Heart right ventricle (tissue), 16 donors: ENCODE measurements at regions of chrX and their contacts with region 1.

Region 1: DNA sequence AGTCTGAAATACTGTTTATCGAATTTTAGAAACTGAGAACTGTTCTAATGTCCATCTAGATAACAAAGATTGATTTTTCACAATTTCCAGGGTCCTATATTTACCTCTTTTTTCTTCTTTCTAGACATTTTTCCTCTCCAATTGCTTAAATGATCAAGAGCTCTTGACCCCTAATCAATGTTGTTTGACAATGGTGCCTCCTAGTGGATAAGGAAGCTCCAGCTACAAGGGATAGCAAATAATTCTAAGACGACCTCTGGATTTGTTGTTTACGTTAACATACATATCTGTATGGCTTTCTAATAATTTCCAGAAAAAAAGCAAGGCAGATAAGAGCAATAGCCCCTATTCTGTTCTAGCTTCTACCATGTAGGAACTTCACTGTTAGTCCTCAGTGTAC is 35.8 kb downstream of the GPR82 start:
- DNase-seq: no peak
- ATAC-seq: no peak
- H3K4me3 ChIP-seq: no peak overlapping the region
- H3K27ac ChIP-seq: no peak overlapping the region
- H3K4me1 ChIP-seq: no peaks in the 10 kb centered on the region
- H3K27me3 ChIP-seq: peaks cover 0 to 20% (median 0%) of the 10 kb centered on the region in 7 donors
- CTCF ChIP-seq: peak in 7 of 9 donors; percentile 43 to 61 (median 56)

Region 2: DNA sequence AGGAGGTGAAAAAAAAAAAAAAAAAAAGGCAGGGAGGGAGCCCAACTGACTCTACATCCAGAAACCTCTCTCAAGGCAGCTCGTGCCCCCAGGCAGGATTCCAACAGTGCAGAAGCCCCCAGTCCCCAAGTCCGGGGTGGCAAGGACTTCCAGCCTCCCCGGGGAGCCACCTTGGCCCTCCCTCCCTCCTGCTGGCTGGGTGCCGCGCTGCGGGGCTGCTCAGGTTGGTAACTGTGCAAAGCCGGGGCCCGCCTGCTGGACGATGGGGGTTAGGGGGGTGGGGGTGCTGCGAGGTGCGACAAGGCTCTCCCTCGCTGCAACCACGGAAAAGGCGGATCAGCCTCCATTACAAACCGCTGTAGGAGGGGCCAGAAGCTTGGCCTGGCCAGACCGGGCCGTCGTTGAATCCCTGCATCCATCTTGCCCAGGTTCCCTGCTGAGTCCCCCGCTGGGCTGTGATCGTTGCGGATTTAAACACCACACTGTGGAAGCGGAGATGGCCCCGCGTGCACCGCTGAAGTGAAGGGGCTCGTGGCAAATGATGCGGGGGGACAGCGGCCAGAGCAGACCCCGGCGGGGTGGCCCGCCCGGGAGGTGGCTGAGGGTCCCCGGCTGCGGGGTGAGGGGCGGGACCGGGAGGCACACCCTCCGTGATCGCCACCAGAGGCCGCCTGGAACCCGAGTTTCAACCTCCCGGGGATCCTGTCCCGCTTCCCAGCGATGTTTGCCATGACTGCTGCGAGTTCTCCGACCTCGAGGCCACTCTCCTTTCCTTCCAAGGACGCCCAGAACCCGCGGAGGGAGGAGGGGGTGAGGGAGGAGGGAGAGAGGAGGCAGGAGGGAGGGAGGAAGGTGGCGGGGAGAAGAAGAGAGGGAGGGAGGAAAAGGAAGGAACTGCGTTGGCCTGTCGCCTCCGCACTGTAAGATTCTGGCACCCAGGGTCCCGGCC is 483.9 kb before region 1 on chrX:
- intact Hi-C with region 1: loop called in 1 of 10 experiments (anchors 5 kb)
- DNase-seq: peak; percentile 64 to 66
- ATAC-seq: peak; percentile 77 to 95 (median 92)
- H3K4me3 ChIP-seq: peak overlapping the region; percentile 38 to 68 (median 56)
- H3K27ac ChIP-seq: peak overlapping the region in 6 of 10 donors; percentile 2 to 60 (median 49)
- H3K4me1 ChIP-seq: peaks cover 0 to 19% (median 0%) of the 10 kb centered on the region in 9 donors
- H3K27me3 ChIP-seq: peaks cover 0 to 49% (median 0%) of the 10 kb centered on the region in 7 donors
- CTCF ChIP-seq: peak; percentile 11 to 64 (median 53)

Region 3: GRCh38 chrX:41561045-41561444 is 198.8 kb before region 1 on chrX:
- intact Hi-C with region 1: loop called in 3 of 10 experiments (anchors 5 to 10 kb)
- DNase-seq: peak in 1 of 2 donors; percentile 31
- ATAC-seq: peak in 6 of 8 donors; percentile 68 to 91 (median 74)
- H3K4me3 ChIP-seq: no peak overlapping the region
- H3K27ac ChIP-seq: peak overlapping the region in 5 of 10 donors; percentile 48 to 77 (median 60)
- H3K4me1 ChIP-seq: peaks cover 0 to 31% (median 6%) of the 10 kb centered on the region in 9 donors
- H3K27me3 ChIP-seq: peaks cover 0 to 32% (median 0%) of the 10 kb centered on the region in 7 donors
- CTCF ChIP-seq: no peak

Region 4: DNA sequence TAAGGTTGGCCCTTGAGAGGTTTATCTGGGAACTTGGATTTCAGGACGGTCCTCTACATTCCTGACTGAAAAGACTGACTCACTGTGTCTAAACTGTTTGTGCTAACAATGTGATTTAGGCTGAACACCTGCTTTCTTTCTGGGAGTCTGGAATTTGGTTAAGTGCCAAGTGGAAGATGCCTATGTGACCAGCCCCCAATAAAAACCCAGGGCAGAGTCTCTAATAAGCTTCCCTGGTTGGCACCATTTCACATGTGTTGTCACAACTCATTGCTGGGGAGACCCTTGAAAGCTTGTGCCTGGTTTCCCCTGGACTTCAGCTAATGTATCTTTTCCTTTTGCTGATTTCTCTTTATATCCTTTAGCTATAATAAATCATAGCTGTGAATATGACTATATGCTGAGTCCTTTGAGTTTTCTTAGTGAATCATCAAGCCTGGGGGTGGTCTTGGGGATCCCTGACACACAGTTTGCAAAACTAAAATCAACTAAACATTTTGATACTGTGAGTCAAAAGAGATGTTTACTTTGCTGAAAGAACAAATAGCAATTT is 19.3 kb after region 1 on chrX:
- intact Hi-C with region 1: no loop called
- DNase-seq: no peak
- ATAC-seq: no peak
- H3K4me3 ChIP-seq: no peak overlapping the region
- H3K27ac ChIP-seq: no peak overlapping the region
- H3K4me1 ChIP-seq: peaks cover 0 to 8% (median 0%) of the 10 kb centered on the region in 9 donors
- H3K27me3 ChIP-seq: peaks cover 0 to 4% (median 0%) of the 10 kb centered on the region in 7 donors
- CTCF ChIP-seq: no peak

Region 5: GRCh38 chrX:41923257-41923969 is 163.6 kb after region 1 on chrX and contains the start of gene CASK:
- intact Hi-C with region 1: no loop called
- DNase-seq: peak; percentile 91 to 93
- ATAC-seq: peak; percentile 98 to 99 (median 98)
- H3K4me3 ChIP-seq: peak within 1 kb of the TSS; percentile 56 to 73 (median 67)
- H3K27ac ChIP-seq: peak within 1 kb of the TSS; percentile 50 to 92 (median 83)
- H3K4me1 ChIP-seq: peaks cover 0 to 16% (median 0%) of the 10 kb centered on the region in 9 donors
- H3K27me3 ChIP-seq: peaks cover 0 to 26% (median 0%) of the 10 kb centered on the region in 7 donors
- CTCF ChIP-seq: peak in 3 of 9 donors; percentile 17 to 24 (median 18)
- total RNA-seq, gene CASK: 7.5 to 20.7 (median 13.5) TPM